ENCODE measurements at regions of chr2 and their contacts with region 1.

Region 1: GRCh38 chr2:37635504-37636380 is 35.7 kb downstream of the CDC42EP3 start:
- DNase-seq: peak; percentile 44
- ATAC-seq: peak; percentile 84
- H3K4me3 Mint-ChIP-seq: peak overlapping the region; percentile 52
- H3K27ac Mint-ChIP-seq: peak overlapping the region; percentile 95
- H3K4me1 Mint-ChIP-seq: peaks cover 50% of the 10 kb centered on the region
- H3K27me3 Mint-ChIP-seq: no peaks in the 10 kb centered on the region
- CTCF ChIP-seq: no peak

Region 2: GRCh38 chr2:37427241-37427640 is 208.5 kb before region 1 on chr2:
- CTCF ChIA-PET with region 1: no interaction called
- POLR2A ChIA-PET with region 1: no interaction called
- intact Hi-C with region 1: no loop called
- DNase-seq: no peak
- ATAC-seq: no peak
- H3K4me3 Mint-ChIP-seq: no peak overlapping the region
- H3K27ac Mint-ChIP-seq: no peak overlapping the region
- H3K4me1 Mint-ChIP-seq: no peaks in the 10 kb centered on the region
- H3K27me3 Mint-ChIP-seq: peaks cover 4% of the 10 kb centered on the region
- CTCF ChIP-seq: no peak

Region 3: GRCh38 chr2:37672104-37672869 is 36.5 kb after region 1 on chr2:
- CTCF ChIA-PET with region 1: no interaction called
- POLR2A ChIA-PET with region 1: interaction called, 5 read pairs
- intact Hi-C with region 1: loop called (anchors 1 kb)
- DNase-seq: peak; percentile 68
- ATAC-seq: peak; percentile 54
- H3K4me3 Mint-ChIP-seq: peak overlapping the region; percentile 90
- H3K27ac Mint-ChIP-seq: peak overlapping the region; percentile 84
- H3K4me1 Mint-ChIP-seq: peaks cover 50% of the 10 kb centered on the region
- H3K27me3 Mint-ChIP-seq: no peaks in the 10 kb centered on the region
- CTCF ChIP-seq: no peak

Measured in activated B cell treated with CpG ODN at 0.5 μM for 24 hours (primary cell).